ENCODE measurements at regions of chr12 and their contacts with region 1.

Region 1: DNA sequence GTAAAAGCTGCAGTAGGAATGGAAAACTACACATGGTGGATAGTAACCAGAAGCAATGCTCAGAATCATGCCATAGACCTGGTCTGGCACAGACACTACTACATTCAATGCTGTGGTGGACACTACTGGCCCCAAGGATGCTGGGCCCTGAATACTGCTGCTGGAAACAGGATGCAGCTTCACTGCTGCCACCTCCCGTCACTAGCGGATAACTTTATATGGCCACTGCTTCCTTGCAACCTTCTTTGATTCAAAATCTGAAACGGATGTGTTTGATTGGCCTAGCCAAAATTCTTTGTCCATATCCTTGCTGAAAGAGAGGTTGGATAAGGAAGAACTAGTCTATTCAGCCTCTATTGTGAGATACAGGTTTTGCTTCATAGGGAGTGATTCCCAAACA is 30.7 kb downstream of the ADCY6 start:
- DNase-seq: no peak
- H3K4me3 ChIP-seq: no peak overlapping the region
- H3K4me3 Mint-ChIP-seq: no peak overlapping the region
- H3K27ac ChIP-seq: no peak overlapping the region
- H3K27ac Mint-ChIP-seq: no peak overlapping the region
- H3K4me1 ChIP-seq: no peaks in the 10 kb centered on the region
- H3K4me1 Mint-ChIP-seq: no peaks in the 10 kb centered on the region
- H3K27me3 ChIP-seq: no peaks in the 10 kb centered on the region
- H3K27me3 Mint-ChIP-seq: no peaks in the 10 kb centered on the region

Region 2: GRCh38 chr12:48795480-48796455 is 37.5 kb after region 1 on chr12:
- CTCF ChIA-PET with region 1: interaction called, 88 read pairs
- POLR2A ChIA-PET with region 1: no interaction called
- DNase-seq: peak; percentile 32 to 67 (median 49)
- H3K4me3 ChIP-seq: no peak overlapping the region
- H3K4me3 Mint-ChIP-seq: no peak overlapping the region
- H3K27ac ChIP-seq: no peak overlapping the region
- H3K27ac Mint-ChIP-seq: peak overlapping the region in 1 of 8 donors; percentile 41
- H3K4me1 ChIP-seq: no peaks in the 10 kb centered on the region
- H3K4me1 Mint-ChIP-seq: peaks cover 0 to 5% (median 3%) of the 10 kb centered on the region in 3 donors
- H3K27me3 ChIP-seq: no peaks in the 10 kb centered on the region
- H3K27me3 Mint-ChIP-seq: peaks cover 9 to 17% of the 10 kb centered on the region in 2 donors

Measured in CD8-positive, alpha-beta memory T cell (primary cell).